Sigmoid colon (tissue), 7 donors: ENCODE measurements at regions of chr4 and their contacts with region 1.

Region 1: GRCh38 chr4:185580701-185581100 is 45.4 kb upstream of the PDLIM3 start:
- DNase-seq: no peak
- H3K4me3 ChIP-seq: no peak overlapping the region
- H3K27ac ChIP-seq: no peak overlapping the region
- H3K4me1 ChIP-seq: peaks cover 0 to 17% (median 6%) of the 10 kb centered on the region in 4 donors
- H3K27me3 ChIP-seq: no peaks in the 10 kb centered on the region
- CTCF ChIP-seq: no peak
- EP300 ChIP-seq: no peak
- POLR2A ChIP-seq: no peak

Region 2: GRCh38 chr4:185542626-185543315 is 37.9 kb before region 1 on chr4:
- intact Hi-C with region 1: loop called (anchors 5 kb)
- DNase-seq: peak; percentile 88
- H3K4me3 ChIP-seq: no peak overlapping the region
- H3K27ac ChIP-seq: peak overlapping the region; percentile 23 to 79 (median 70)
- H3K4me1 ChIP-seq: peaks cover 0 to 24% (median 18%) of the 10 kb centered on the region in 4 donors
- H3K27me3 ChIP-seq: no peaks in the 10 kb centered on the region
- CTCF ChIP-seq: no peak
- EP300 ChIP-seq: peak in 2 of 4 donors; percentile 47 to 76
- POLR2A ChIP-seq: no peak

Region 3: GRCh38 chr4:186074189-186074588 is 493.5 kb after region 1 on chr4:
- intact Hi-C with region 1: no loop called
- DNase-seq: no peak
- H3K4me3 ChIP-seq: no peak overlapping the region
- H3K27ac ChIP-seq: no peak overlapping the region
- H3K4me1 ChIP-seq: peaks cover 0 to 15% (median 5%) of the 10 kb centered on the region in 4 donors
- H3K27me3 ChIP-seq: no peaks in the 10 kb centered on the region
- CTCF ChIP-seq: no peak
- EP300 ChIP-seq: no peak
- POLR2A ChIP-seq: no peak